Activated CD4-positive, alpha-beta T cell treated with anti-CD3 and anti-CD28 coated beads, Interleukin-2, amount 10 ng/mL, durations not matched to agents 24 days and 14 days (primary cell): ENCODE measurements at regions of chr2 and their contacts with region 1.

Region 1: GRCh38 chr2:183838295-183838694 is 714.1 kb downstream of the NUP35 start:
- DNase-seq: no peak
- H3K4me3 Mint-ChIP-seq: no peak overlapping the region
- H3K27ac Mint-ChIP-seq: no peak overlapping the region
- H3K4me1 Mint-ChIP-seq: no peaks in the 10 kb centered on the region
- H3K27me3 Mint-ChIP-seq: no peaks in the 10 kb centered on the region

Region 2: DNA sequence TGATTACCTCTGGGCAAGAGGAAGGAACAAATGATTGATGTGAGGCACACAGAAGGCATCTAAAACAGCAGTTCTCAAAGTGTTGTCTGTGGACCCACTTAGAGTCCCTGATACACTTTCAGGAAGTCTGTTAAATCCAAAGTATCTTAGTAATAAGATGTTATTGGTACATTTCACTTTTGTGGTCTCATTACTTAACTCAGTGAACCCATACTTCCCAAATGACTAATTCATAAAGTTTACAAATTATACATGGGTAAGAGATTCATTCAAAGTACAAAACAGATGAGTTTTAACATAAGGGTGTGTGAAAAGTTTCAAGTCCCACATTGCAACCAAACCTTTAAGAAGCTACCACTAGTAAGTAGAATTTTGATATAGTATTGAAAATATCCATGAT is 273.6 kb before region 1 on chr2:
- intact Hi-C with region 1: no loop called
- DNase-seq: no peak
- H3K4me3 Mint-ChIP-seq: no peak overlapping the region
- H3K27ac Mint-ChIP-seq: no peak overlapping the region
- H3K4me1 Mint-ChIP-seq: no peaks in the 10 kb centered on the region
- H3K27me3 Mint-ChIP-seq: no peaks in the 10 kb centered on the region

Region 3: DNA sequence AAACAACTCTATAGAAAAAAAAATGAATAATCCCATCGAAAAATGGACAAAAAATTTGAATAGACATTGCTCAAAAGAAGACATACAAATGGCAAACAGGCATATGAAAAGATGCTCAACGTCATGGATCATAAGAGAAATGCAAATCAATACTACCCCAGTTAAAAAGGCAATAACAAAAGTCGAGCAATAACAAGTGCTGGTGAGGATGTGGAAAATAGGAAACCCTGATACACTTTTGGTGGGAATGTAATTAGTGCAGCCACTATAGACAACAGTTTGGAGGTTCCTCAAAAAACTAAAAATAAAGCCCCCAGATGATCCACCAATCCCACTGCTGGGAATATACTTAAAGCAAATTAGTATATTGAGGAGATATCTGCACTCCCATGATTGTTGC is 12.6 kb before region 1 on chr2:
- intact Hi-C with region 1: loop called (anchors 1 kb)
- DNase-seq: no peak
- H3K4me3 Mint-ChIP-seq: no peak overlapping the region
- H3K27ac Mint-ChIP-seq: no peak overlapping the region
- H3K4me1 Mint-ChIP-seq: no peaks in the 10 kb centered on the region
- H3K27me3 Mint-ChIP-seq: no peaks in the 10 kb centered on the region

Region 4: GRCh38 chr2:184078496-184078895 is 240.2 kb after region 1 on chr2:
- intact Hi-C with region 1: no loop called
- DNase-seq: no peak
- H3K4me3 Mint-ChIP-seq: no peak overlapping the region
- H3K27ac Mint-ChIP-seq: no peak overlapping the region
- H3K4me1 Mint-ChIP-seq: no peaks in the 10 kb centered on the region
- H3K27me3 Mint-ChIP-seq: no peaks in the 10 kb centered on the region